ENCODE measurements at regions of chr20 and their contacts with region 1.

Region 1: GRCh38 chr20:602111-602970 is 7.8 kb downstream of the TCF15 start:
- DNase-seq: peak; percentile 49 to 88 (median 83)
- ATAC-seq: peak; percentile 83 to 87
- H3K4me3 ChIP-seq: no peak overlapping the region
- H3K27ac ChIP-seq: peak overlapping the region; percentile 91
- H3K4me1 ChIP-seq: peaks cover 12% of the 10 kb centered on the region
- H3K27me3 ChIP-seq: no peaks in the 10 kb centered on the region

Region 2: DNA sequence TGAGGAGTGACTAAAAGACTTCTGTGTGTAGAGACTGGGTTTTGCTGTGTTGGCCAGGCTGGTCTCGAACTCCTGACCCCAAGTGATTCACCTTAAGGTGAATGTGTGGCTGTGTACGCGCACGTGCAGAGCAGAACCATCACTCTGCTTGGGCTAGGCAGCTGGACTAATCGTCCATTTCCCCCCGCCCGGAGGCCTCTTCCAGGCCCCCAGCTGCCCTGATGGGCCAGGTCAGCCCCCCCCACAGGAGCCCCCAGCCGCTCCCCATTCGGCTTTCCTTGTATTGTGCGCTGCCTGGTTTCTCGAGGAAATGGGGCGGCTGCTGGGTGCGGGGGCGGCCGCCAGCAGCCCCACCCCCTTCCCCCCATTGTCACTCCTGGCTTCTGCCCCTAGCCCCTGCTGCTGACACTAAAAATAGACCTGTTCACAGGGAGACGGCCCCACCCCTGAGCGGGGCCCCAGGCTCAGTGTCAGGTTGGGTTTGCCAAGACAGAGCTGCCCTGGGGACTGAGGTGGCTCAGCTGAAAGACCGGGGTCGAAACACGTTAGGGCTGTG is 34.2 kb before region 1 on chr20:
- intact Hi-C with region 1: loop called in 1 of 4 experiments (anchors 5 kb)
- DNase-seq: peak; percentile 44 to 86 (median 68)
- ATAC-seq: peak; percentile 59 to 76
- H3K4me3 ChIP-seq: no peak overlapping the region
- H3K27ac ChIP-seq: peak overlapping the region; percentile 88
- H3K4me1 ChIP-seq: peaks cover 13% of the 10 kb centered on the region
- H3K27me3 ChIP-seq: no peaks in the 10 kb centered on the region